CD4-positive, alpha-beta memory T cell (primary cell): ENCODE measurements at regions of chr10 and their contacts with region 1.

Region 1: DNA sequence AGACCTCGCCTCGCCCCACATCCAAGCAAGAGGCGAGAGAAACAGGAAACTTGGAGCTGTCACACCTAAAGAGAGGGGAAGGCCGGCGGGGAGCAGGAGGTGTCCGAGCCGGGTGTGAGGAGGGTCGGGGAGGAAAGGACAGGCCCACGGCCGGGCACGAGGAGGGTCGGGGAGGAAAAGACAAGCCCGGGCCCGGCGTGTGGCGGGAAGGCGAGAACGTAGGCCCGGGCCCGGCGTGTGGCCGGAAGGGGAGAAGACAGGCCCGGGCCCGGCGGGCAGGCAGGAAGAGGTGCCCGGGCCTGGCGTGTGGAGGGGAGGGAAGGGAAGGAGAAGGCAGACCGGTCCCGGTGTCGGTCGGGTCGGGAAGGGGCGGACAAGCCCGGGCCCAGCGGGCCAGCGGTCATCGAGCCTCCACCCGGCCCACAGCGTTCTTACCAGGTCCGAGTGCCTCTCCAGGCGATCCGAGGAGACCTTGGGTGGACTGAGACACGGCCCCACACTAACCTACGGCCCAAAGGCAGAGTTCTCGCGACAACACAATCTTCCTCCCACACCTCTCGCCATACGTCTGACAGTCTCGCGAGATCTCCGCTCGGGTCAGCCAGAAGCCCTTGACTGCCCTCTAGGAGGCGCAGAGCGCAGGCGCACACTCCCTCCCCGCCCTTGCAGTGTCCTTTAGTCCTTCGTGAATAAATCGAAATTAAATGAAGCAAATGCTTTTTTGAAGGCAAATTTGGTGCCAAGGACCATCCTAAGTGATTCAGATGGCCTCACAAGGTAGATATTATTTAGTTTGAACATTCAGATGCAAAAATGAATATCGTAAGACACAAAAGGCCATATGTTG is at the start of gene NCOA4:
- DNase-seq: peak; percentile 93 to 97 (median 95)
- H3K4me3 ChIP-seq: peak within 1 kb of the TSS; percentile 55 to 92
- H3K4me3 Mint-ChIP-seq: peak within 1 kb of the TSS; percentile 93 to 100 (median 97)
- H3K27ac ChIP-seq: peak within 1 kb of the TSS; percentile 91
- H3K27ac Mint-ChIP-seq: peak within 1 kb of the TSS; percentile 96 to 99 (median 98)
- H3K4me1 ChIP-seq: peaks cover 50% of the 10 kb centered on the region
- H3K4me1 Mint-ChIP-seq: peaks cover 33 to 55% (median 47%) of the 10 kb centered on the region in 4 donors
- H3K27me3 ChIP-seq: no peaks in the 10 kb centered on the region
- H3K27me3 Mint-ChIP-seq: peaks cover 0 to 5% of the 10 kb centered on the region in 2 donors
- total RNA-seq, gene NCOA4: 71.1 to 71.9 TPM

Region 2: DNA sequence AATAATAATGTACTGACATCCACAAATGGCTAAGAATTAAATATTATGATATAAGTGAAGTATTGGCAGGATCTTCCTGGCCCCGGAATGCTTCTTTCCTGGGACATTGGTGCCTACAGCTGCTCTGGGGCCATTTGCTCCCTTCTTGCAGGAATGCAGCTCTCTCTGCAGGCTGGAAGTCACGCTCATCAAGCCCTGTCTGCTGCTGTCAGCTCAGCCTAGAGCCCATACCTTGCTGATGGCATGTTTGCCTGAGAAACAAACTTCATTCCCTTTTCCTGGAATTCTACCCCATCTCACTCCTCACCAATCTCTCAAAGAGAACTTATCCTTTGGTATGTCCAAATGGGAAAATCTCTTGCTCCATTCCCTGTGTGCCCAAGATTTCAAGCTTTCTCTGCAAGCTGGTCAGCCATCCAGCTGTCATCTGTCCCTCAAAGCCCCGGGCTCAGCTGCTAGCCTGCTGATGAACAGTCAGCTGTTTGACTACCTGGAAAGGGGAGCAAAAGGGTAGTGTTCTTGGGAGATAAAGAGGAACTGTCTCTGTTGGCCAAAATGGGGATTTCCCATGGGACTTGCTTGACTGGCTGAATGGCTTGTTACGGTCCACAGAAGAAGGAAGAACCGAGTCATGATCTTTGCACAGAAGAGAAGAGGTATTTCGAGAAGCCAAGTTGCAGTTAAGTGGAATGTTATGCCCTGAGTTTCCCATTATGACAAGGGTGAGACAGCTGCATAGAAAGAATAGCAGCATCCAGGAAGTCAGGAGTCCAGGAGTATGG is 1082.8 kb before region 1 on chr10:
- CTCF ChIA-PET with region 1: no interaction called
- POLR2A ChIA-PET with region 1: no interaction called
- intact Hi-C with region 1: no loop called
- DNase-seq: no peak
- H3K4me3 ChIP-seq: no peak overlapping the region
- H3K4me3 Mint-ChIP-seq: no peak overlapping the region
- H3K27ac ChIP-seq: no peak overlapping the region
- H3K27ac Mint-ChIP-seq: peak overlapping the region in 1 of 7 donors; percentile 10
- H3K4me1 ChIP-seq: no peaks in the 10 kb centered on the region
- H3K4me1 Mint-ChIP-seq: peaks cover 0 to 3% (median 0%) of the 10 kb centered on the region in 4 donors
- H3K27me3 ChIP-seq: no peaks in the 10 kb centered on the region
- H3K27me3 Mint-ChIP-seq: peaks cover 5 to 7% of the 10 kb centered on the region in 2 donors

Region 3: DNA sequence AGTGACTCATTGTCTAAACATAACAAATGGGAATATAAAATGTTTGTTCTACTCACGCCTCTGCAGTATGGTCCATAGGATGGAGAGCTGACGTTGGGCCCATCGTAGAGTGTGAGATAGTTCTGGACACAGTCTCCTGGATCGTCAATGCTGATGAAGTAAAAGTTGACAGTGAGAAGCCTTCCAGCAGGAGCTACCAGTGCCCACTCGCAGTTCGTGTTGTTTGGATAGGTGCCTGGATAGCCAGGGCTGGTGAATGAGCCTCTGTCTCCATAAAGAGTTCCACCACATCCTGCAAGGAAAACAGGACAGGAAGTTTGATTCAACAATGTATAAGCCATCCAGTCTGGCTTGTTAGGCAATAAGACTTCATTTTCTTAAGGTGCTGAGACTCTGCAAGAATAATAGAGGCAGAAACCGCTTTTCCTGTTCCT is 794.5 kb before region 1 on chr10:
- CTCF ChIA-PET with region 1: interaction called, 3 read pairs
- POLR2A ChIA-PET with region 1: no interaction called
- intact Hi-C with region 1: loop called (anchors 5 kb)
- DNase-seq: no peak
- H3K4me3 ChIP-seq: no peak overlapping the region
- H3K4me3 Mint-ChIP-seq: no peak overlapping the region
- H3K27ac ChIP-seq: no peak overlapping the region
- H3K27ac Mint-ChIP-seq: no peak overlapping the region
- H3K4me1 ChIP-seq: no peaks in the 10 kb centered on the region
- H3K4me1 Mint-ChIP-seq: no peaks in the 10 kb centered on the region
- H3K27me3 ChIP-seq: no peaks in the 10 kb centered on the region
- H3K27me3 Mint-ChIP-seq: peaks cover 9 to 13% of the 10 kb centered on the region in 2 donors

Region 4: DNA sequence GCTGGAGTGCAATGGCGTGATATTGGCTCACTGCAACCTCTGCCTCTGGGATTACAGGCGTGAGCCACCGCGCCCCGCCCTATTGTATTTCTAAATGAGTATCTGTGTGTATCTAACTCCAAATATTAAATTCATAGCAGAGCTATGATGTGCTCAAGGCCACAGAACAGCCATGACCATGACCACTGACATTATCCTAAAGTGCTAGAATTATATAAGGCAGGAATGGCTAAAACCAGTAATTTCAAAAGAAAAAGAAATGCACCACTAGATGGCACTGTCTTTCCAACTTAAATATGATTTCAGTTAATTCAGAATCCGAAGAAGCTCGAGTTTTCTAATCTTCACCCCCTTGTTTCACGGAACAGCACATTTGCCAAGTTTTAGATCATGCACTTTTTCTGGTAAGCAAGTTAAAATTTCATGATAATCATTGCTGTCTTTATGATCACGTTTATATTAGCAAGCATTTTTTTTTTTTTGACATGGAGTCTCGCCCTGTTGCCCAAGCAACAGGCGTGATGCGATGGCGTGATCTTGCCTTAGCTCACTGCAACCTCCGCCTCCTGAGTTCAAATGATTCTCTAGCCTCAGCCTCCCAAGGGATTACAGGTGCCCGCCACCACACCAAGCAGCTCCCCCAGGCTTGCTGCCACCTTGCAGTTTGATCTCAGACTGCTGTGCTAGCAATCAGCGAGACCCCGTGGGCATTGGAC is 780.2 kb before region 1 on chr10:
- CTCF ChIA-PET with region 1: interaction called, 3 read pairs
- POLR2A ChIA-PET with region 1: no interaction called
- intact Hi-C with region 1: loop called (anchors 5 kb)
- DNase-seq: peak in 4 of 5 donors; percentile 55 to 65 (median 58)
- H3K4me3 ChIP-seq: no peak overlapping the region
- H3K4me3 Mint-ChIP-seq: peak overlapping the region in 4 of 8 donors; percentile 6 to 58 (median 36)
- H3K27ac ChIP-seq: no peak overlapping the region
- H3K27ac Mint-ChIP-seq: peak overlapping the region in 1 of 7 donors; percentile 6
- H3K4me1 ChIP-seq: no peaks in the 10 kb centered on the region
- H3K4me1 Mint-ChIP-seq: peaks cover 4 to 9% (median 7%) of the 10 kb centered on the region in 4 donors
- H3K27me3 ChIP-seq: no peaks in the 10 kb centered on the region
- H3K27me3 Mint-ChIP-seq: peaks cover 2% of the 10 kb centered on the region in 2 donors

Region 5: GRCh38 chr10:46079831-46080575 is 49.7 kb after region 1 on chr10:
- CTCF ChIA-PET with region 1: interaction called, 12 read pairs
- POLR2A ChIA-PET with region 1: interaction called, 4 read pairs
- intact Hi-C with region 1: no loop called
- DNase-seq: no peak
- H3K4me3 ChIP-seq: no peak overlapping the region
- H3K4me3 Mint-ChIP-seq: peak overlapping the region in 1 of 8 donors; percentile 17
- H3K27ac ChIP-seq: no peak overlapping the region
- H3K27ac Mint-ChIP-seq: peak overlapping the region in 6 of 7 donors; percentile 42 to 83 (median 66)
- H3K4me1 ChIP-seq: peaks cover 18% of the 10 kb centered on the region
- H3K4me1 Mint-ChIP-seq: peaks cover 18 to 57% (median 34%) of the 10 kb centered on the region in 4 donors
- H3K27me3 ChIP-seq: no peaks in the 10 kb centered on the region
- H3K27me3 Mint-ChIP-seq: no peaks in the 10 kb centered on the region

Region 6: DNA sequence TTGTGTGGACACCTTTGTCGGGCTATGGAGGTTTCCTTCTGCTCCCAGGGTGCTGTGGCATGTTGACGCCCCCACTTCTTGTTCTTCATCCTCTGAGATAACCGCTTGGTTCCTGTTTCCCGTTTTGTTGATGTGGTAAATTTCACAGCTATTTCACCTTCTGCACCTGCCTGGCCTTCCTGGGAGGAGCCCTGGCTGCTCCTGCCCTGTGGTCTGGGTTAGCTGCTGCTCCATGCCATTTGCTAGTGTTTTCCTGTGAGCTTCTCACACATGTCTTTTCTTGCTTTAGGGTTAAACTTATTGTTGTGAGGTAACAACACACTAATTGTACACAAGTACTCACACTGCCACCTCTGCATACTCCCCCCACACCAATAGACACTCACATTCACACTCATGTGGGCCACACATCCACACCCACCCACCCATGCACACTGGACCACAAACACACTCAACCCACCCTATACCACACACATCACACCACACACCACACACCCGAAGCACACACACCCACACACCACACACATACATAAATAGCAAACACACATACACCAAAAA is 62.3 kb after region 1 on chr10:
- CTCF ChIA-PET with region 1: interaction called, 11 read pairs
- POLR2A ChIA-PET with region 1: interaction called, 9 read pairs
- intact Hi-C with region 1: no loop called
- DNase-seq: peak in 4 of 5 donors; percentile 53 to 69 (median 63)
- H3K4me3 ChIP-seq: peak overlapping the region; percentile 43 to 65
- H3K4me3 Mint-ChIP-seq: no peak overlapping the region
- H3K27ac ChIP-seq: peak overlapping the region; percentile 30
- H3K27ac Mint-ChIP-seq: no peak overlapping the region
- H3K4me1 ChIP-seq: peaks cover 80% of the 10 kb centered on the region
- H3K4me1 Mint-ChIP-seq: peaks cover 0 to 38% (median 19%) of the 10 kb centered on the region in 4 donors
- H3K27me3 ChIP-seq: no peaks in the 10 kb centered on the region
- H3K27me3 Mint-ChIP-seq: no peaks in the 10 kb centered on the region

Region 7: GRCh38 chr10:46106410-46107255 is 76.3 kb after region 1 on chr10:
- CTCF ChIA-PET with region 1: interaction called, 8 read pairs
- POLR2A ChIA-PET with region 1: interaction called, 13 read pairs
- intact Hi-C with region 1: loop called (anchors 5 kb)
- DNase-seq: peak in 4 of 5 donors; percentile 43 to 60 (median 48)
- H3K4me3 ChIP-seq: peak overlapping the region in 1 of 2 donors; percentile 30
- H3K4me3 Mint-ChIP-seq: peak overlapping the region; percentile 78 to 97 (median 92)
- H3K27ac ChIP-seq: peak overlapping the region; percentile 60
- H3K27ac Mint-ChIP-seq: peak overlapping the region in 6 of 7 donors; percentile 9 to 87 (median 51)
- H3K4me1 ChIP-seq: peaks cover 13% of the 10 kb centered on the region
- H3K4me1 Mint-ChIP-seq: peaks cover 13 to 21% (median 15%) of the 10 kb centered on the region in 4 donors
- H3K27me3 ChIP-seq: no peaks in the 10 kb centered on the region
- H3K27me3 Mint-ChIP-seq: peaks cover 2 to 3% of the 10 kb centered on the region in 2 donors

Region 8: GRCh38 chr10:46268076-46268881 is 238.0 kb after region 1 on chr10:
- CTCF ChIA-PET with region 1: no interaction called
- POLR2A ChIA-PET with region 1: interaction called, 5 read pairs
- intact Hi-C with region 1: loop called (anchors 10 kb)
- DNase-seq: peak; percentile 27 to 76 (median 67)
- H3K4me3 ChIP-seq: peak overlapping the region; percentile 58 to 67
- H3K4me3 Mint-ChIP-seq: no peak overlapping the region
- H3K27ac ChIP-seq: peak overlapping the region; percentile 62
- H3K27ac Mint-ChIP-seq: no peak overlapping the region
- H3K4me1 ChIP-seq: peaks cover 70% of the 10 kb centered on the region
- H3K4me1 Mint-ChIP-seq: peaks cover 33 to 64% (median 42%) of the 10 kb centered on the region in 4 donors
- H3K27me3 ChIP-seq: no peaks in the 10 kb centered on the region
- H3K27me3 Mint-ChIP-seq: no peaks in the 10 kb centered on the region